Left ventricle myocardium inferior (tissue), 1 donor: ENCODE measurements at regions of chr11 and their contacts with region 1.

Region 1: GRCh38 chr11:13955971-13956421 is 6.5 kb upstream of the SPON1 start:
- DNase-seq: peak; percentile 25
- H3K4me3 ChIP-seq: no peak overlapping the region
- H3K27ac ChIP-seq: no peak overlapping the region
- H3K4me1 ChIP-seq: no peaks in the 10 kb centered on the region
- H3K27me3 ChIP-seq: peaks cover 95% of the 10 kb centered on the region
- CTCF ChIP-seq: peak; percentile 89

Region 2: GRCh38 chr11:13602844-13603243 is 353.2 kb before region 1 on chr11:
- intact Hi-C with region 1: no loop called
- DNase-seq: no peak
- H3K4me3 ChIP-seq: no peak overlapping the region
- H3K27ac ChIP-seq: no peak overlapping the region
- H3K4me1 ChIP-seq: no peaks in the 10 kb centered on the region
- H3K27me3 ChIP-seq: peaks cover 15% of the 10 kb centered on the region
- CTCF ChIP-seq: no peak

Region 3: DNA sequence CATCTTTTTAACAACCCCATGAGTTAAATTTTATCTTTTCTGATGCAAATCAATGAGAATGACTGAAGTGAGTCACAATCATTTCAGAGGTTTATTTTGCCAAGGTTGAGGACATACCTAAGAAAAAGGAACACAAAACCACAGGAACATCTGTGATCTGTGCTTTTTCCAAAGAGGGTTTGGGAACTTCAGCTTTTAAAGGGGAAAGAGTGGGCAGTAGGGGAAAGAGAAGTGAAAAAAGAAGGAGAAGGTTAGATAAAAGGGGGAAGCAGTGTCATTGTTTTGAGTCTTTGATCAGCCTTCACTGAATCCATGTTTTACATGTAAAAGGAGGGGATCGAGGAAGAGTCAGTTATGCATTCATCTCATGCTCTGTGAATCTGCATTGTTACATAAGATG is 38.7 kb before region 1 on chr11:
- intact Hi-C with region 1: no loop called
- DNase-seq: no peak
- H3K4me3 ChIP-seq: no peak overlapping the region
- H3K27ac ChIP-seq: no peak overlapping the region
- H3K4me1 ChIP-seq: no peaks in the 10 kb centered on the region
- H3K27me3 ChIP-seq: peaks cover 32% of the 10 kb centered on the region
- CTCF ChIP-seq: no peak

Region 4: DNA sequence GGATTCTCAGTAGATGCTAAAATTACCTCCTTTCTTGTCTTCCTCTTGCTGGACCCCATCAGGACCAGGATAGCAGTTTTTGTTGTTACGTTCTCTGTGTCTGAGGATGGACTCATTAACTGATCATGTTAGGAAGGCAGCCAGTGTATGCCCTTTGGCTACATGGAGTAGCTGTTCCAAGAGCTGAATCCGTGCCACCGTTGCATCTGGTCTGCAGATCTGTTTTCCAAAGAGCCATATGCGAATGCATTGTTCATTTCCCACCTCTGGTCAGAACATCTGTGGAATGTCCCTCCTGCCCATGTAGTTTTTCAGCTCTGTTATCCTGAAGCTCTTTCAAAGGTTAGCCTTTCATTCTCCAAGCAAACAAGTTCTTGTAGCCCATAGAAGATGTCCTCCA is 194.9 kb after region 1 on chr11:
- intact Hi-C with region 1: loop called (anchors 5 kb)
- DNase-seq: no peak
- H3K4me3 ChIP-seq: no peak overlapping the region
- H3K27ac ChIP-seq: no peak overlapping the region
- H3K4me1 ChIP-seq: no peaks in the 10 kb centered on the region
- H3K27me3 ChIP-seq: peaks cover 26% of the 10 kb centered on the region
- CTCF ChIP-seq: no peak

Region 5: DNA sequence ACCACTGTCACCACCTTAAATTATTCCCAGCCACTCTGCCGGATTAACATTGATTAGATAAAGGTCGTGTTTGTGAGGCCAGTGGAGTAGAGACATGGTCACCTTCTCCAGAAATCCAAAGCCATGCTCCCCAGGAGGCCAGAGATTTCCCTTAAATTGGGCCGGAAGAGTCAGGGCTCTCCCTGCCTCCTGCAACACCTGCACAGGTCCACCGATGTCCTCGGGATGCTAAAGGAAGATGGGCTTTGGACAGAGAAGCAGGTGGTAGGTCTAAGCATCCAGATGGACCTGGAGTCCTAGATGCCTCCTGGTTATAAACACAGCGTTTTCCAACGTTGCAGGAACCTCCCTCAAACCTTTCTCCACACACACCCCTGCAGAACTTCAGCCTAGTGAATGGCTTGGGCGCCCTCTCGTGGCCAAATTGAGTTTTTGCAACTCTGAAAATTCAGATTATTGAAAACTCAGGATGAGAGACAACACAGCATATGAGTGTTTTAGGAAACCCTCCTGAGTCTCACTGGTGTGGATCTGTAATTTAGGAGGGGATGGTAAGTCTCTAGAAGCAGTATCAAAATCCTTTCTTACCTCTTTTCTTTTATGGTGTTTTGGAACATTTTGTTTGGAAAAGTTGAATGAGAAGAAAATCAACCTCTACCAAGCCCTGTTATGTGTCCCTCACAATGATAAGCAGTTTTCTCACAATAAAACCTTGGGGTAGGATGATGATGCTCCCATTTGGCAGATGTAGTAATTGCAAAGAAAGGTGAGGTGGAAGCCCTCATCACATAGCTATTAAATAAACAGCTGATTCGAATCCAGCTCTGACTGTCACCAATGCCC is 293.3 kb after region 1 on chr11:
- intact Hi-C with region 1: loop called (anchors 5 kb)
- DNase-seq: peak; percentile 37
- H3K4me3 ChIP-seq: no peak overlapping the region
- H3K27ac ChIP-seq: no peak overlapping the region
- H3K4me1 ChIP-seq: peaks cover 11% of the 10 kb centered on the region
- H3K27me3 ChIP-seq: peaks cover 95% of the 10 kb centered on the region
- CTCF ChIP-seq: peak; percentile 92